ENCODE measurements at regions of chr19 and their contacts with region 1.

Region 1: DNA sequence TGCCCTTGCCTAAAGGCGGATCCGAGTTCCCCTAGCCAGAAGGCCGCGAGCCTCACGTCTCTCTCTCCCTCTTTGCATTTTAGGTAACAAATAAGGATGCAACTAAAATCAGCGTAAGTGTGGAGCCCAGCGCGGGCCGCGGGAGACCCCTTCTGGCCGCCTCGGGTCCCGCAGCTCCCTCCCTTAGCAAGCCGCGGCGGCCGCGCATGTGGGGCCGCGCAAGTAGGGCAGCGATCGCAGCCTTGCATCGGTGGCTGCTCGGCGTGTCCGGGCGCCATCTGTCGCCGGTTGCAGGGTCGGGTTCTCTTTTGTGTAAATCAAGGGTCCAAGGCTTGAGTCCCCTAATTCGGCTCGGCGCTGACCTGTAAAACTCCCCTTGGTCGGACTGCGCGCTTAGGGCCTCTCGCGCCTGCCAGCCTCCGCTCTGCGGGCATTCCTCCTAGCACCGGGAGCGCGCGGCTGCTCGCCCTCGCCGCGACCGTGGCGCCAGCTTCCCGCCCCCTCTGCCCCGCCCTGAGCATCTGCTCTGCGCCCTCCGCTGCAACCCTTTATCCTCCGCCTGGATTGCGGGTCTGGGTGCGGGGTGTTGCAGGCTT is 2.7 kb downstream of the VSTM2B start:
- DNase-seq: peak; percentile 25 to 49
- ATAC-seq: peak; percentile 62 to 83 (median 80)
- H3K4me3 ChIP-seq: peak overlapping the region in 8 of 10 donors; percentile 3 to 44 (median 32)
- H3K27ac ChIP-seq: no peak overlapping the region
- H3K4me1 ChIP-seq: peaks cover 6 to 47% (median 40%) of the 10 kb centered on the region in 9 donors
- H3K27me3 ChIP-seq: peaks cover 54 to 100% (median 99%) of the 10 kb centered on the region in 7 donors
- CTCF ChIP-seq: peak; percentile 32 to 86 (median 74)

Region 2: DNA sequence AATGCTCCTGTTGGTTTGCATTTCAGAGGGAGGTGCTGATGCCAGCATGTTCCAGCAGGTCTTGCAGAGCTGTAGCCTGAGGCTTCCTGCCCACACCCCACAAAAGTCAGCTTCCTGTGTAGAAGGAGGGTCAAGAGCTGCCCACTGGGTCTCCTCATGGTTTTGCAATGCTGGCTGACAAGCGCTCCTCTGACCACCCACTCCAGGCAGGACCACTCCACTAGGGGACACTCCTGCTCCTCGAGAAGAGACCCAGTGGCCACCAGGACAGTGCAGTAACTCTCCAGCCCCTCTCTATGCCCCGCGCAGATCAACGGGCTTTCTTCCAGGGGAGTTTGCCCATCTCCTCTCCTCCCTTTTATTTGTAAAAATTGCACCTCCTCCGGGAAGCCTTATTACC is 242.6 kb before region 1 on chr19:
- intact Hi-C with region 1: loop called in 1 of 10 experiments (anchors 10 kb)
- DNase-seq: no peak
- ATAC-seq: no peak
- H3K4me3 ChIP-seq: no peak overlapping the region
- H3K27ac ChIP-seq: no peak overlapping the region
- H3K4me1 ChIP-seq: no peaks in the 10 kb centered on the region
- H3K27me3 ChIP-seq: peaks cover 0 to 66% (median 41%) of the 10 kb centered on the region in 7 donors
- CTCF ChIP-seq: peak in 3 of 9 donors; percentile 12 to 42 (median 22)

Region 3: DNA sequence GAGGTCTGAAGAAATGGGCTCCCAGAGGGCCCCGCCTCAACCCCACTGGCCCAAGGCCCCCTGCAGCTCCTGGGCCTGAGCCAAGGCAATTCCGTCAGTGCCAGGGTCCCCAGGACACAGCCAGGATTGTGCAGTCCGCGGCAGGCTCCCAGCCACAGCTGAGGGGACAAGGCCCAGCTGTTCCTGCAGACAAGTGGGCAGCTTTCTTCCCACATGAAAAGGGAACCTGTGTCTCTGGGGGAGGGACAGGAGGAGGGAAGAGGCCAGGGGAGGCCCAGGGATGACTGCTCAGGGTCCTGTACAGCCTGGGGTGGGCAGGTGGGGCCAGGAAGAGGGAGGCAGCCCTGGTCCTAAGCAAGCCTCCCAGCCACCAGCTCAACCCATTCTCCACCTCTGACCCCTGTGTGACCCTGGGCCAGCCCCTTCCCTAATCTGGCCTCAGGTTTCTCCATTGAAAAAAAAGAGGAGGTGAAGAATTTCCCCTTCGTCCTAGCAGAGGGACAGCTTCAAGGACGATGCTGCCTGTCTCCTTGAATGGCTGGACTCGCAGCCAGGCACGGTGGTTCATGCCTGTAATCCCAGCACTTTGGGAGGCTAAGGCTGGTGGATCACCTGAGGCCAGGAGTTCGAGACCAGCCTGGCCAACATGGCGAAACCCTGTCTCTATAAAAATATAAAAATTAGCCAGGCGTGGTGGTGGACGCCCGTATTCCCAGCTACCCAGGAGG is 23.2 kb before region 1 on chr19:
- intact Hi-C with region 1: no loop called
- DNase-seq: no peak
- ATAC-seq: no peak
- H3K4me3 ChIP-seq: no peak overlapping the region
- H3K27ac ChIP-seq: no peak overlapping the region
- H3K4me1 ChIP-seq: no peaks in the 10 kb centered on the region
- H3K27me3 ChIP-seq: peaks cover 0 to 40% (median 23%) of the 10 kb centered on the region in 7 donors
- CTCF ChIP-seq: no peak

Region 4: DNA sequence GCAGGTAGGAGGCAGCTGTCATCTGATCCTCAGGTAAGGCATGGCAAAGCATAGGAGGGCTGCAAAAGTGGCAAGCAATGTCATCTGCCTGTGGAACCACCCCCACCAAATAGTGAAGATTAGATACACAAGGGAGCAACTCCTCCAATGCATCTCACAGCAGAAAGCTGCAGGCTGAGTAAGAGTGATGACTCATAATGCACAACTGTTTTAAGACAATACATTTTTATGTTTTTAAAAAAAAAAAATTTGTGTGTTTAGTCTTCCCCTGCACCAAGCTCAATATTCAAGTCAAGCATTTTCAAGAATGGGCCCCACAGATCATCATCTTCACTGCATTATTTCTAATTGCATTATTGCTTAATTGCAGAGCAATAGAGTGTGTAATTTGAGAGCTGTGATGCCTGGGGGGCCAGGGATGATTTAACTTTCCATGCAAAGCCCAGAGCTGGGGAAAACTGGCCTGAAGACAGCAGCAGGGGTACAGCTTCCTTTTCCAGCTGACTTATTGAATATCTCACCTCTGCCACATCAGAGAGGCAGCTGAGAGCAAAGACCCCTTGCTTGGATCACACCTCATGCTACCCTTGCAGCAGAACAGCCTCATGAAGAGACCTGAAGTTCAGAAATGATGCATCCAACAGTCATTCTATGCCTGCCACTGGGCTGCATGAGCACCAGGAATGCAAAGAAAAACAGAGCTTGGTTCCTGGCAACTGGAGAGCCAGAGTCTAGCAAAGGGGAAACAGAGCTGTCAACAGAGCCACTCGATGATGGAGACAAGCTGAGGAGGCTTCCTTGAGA is 55.0 kb after region 1 on chr19:
- intact Hi-C with region 1: no loop called
- DNase-seq: no peak
- ATAC-seq: no peak
- H3K4me3 ChIP-seq: no peak overlapping the region
- H3K27ac ChIP-seq: no peak overlapping the region
- H3K4me1 ChIP-seq: no peaks in the 10 kb centered on the region
- H3K27me3 ChIP-seq: peaks cover 0 to 50% (median 26%) of the 10 kb centered on the region in 7 donors
- CTCF ChIP-seq: no peak

Measured in heart right ventricle (tissue), 16 donors.